CD8-positive, alpha-beta memory T cell (primary cell): ENCODE measurements at regions of chr1 and their contacts with region 1.

Region 1: DNA sequence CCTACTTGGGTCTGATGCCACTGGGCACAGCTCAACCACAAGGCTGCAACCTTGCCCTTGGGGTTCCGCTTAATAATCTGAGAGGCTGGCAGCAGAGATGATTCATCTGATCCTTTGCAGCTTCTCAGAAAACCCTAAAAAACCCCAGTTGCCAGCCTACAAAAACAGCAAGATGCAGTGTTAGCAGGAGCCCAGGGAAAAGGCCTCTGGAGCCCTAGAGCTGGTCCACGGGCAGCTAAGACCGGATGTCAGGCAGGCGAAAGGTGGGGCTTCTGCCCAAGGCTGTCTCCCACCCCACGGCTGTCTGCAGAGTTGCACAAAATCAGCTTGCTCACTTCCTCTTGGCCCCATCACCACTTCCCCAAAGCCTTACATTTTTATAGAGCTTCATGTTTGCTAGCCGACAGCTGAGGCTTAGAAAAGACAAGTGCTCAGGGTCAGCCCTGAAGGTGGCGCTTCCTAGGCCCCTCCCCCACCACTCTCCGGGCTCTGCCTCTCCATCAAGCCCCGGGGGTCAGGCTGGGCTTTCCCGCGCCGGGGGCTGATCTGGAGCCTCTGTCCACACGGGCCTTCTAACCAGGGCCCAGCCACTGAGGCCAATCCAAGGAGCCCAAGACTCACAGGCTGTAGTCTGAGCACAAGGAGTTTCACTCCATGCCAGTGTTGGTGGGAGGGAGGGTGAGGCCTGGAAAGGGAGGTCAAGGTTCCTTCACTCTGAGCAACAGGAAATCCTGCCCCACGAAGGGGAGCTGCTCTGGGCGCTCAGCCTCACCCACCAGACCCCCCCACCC is 4.2 kb upstream of the ADORA3 start:
- DNase-seq: peak; percentile 43 to 72 (median 52)
- H3K4me3 ChIP-seq: peak overlapping the region; percentile 68
- H3K4me3 Mint-ChIP-seq: peak overlapping the region; percentile 22 to 88 (median 83)
- H3K27ac ChIP-seq: peak overlapping the region; percentile 87
- H3K27ac Mint-ChIP-seq: peak overlapping the region; percentile 74 to 99 (median 96)
- H3K4me1 ChIP-seq: peaks cover 88% of the 10 kb centered on the region
- H3K4me1 Mint-ChIP-seq: peaks cover 57 to 61% (median 60%) of the 10 kb centered on the region in 3 donors
- H3K27me3 ChIP-seq: no peaks in the 10 kb centered on the region
- H3K27me3 Mint-ChIP-seq: no peaks in the 10 kb centered on the region

Region 2: DNA sequence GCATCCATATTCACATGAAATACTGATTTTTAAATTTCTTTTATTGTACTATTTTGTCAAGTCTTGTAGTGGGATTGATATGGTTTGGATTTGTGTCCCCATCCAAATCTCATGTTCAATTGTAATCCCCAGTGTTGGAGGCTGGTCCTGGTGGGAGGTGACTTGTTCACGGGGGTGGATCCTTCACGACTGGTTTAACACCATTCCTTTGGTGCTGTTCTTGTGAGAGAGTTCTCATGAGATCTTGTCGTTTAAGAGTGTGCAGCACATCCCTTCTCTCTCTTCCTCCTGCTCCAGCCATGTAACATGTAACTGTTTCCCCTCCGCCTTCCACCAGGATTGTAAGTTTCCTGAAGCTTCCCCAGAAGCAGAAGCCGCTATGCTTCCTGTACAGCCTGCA is 395.6 kb before region 1 on chr1:
- CTCF ChIA-PET with region 1: no interaction called
- POLR2A ChIA-PET with region 1: no interaction called
- DNase-seq: no peak
- H3K4me3 ChIP-seq: no peak overlapping the region
- H3K4me3 Mint-ChIP-seq: no peak overlapping the region
- H3K27ac ChIP-seq: no peak overlapping the region
- H3K27ac Mint-ChIP-seq: no peak overlapping the region
- H3K4me1 ChIP-seq: no peaks in the 10 kb centered on the region
- H3K4me1 Mint-ChIP-seq: no peaks in the 10 kb centered on the region
- H3K27me3 ChIP-seq: no peaks in the 10 kb centered on the region
- H3K27me3 Mint-ChIP-seq: peaks cover 5 to 6% of the 10 kb centered on the region in 2 donors

Region 3: GRCh38 chr1:111471012-111471411 is 36.6 kb before region 1 on chr1:
- CTCF ChIA-PET with region 1: interaction called, 33 read pairs
- POLR2A ChIA-PET with region 1: interaction called, 4 read pairs
- DNase-seq: peak; percentile 47 to 84 (median 82)
- H3K4me3 ChIP-seq: peak overlapping the region; percentile 55
- H3K4me3 Mint-ChIP-seq: no peak overlapping the region
- H3K27ac ChIP-seq: peak overlapping the region; percentile 40
- H3K27ac Mint-ChIP-seq: no peak overlapping the region
- H3K4me1 ChIP-seq: peaks cover 60% of the 10 kb centered on the region
- H3K4me1 Mint-ChIP-seq: peaks cover 22 to 35% (median 29%) of the 10 kb centered on the region in 3 donors
- H3K27me3 ChIP-seq: no peaks in the 10 kb centered on the region
- H3K27me3 Mint-ChIP-seq: no peaks in the 10 kb centered on the region

Region 4: DNA sequence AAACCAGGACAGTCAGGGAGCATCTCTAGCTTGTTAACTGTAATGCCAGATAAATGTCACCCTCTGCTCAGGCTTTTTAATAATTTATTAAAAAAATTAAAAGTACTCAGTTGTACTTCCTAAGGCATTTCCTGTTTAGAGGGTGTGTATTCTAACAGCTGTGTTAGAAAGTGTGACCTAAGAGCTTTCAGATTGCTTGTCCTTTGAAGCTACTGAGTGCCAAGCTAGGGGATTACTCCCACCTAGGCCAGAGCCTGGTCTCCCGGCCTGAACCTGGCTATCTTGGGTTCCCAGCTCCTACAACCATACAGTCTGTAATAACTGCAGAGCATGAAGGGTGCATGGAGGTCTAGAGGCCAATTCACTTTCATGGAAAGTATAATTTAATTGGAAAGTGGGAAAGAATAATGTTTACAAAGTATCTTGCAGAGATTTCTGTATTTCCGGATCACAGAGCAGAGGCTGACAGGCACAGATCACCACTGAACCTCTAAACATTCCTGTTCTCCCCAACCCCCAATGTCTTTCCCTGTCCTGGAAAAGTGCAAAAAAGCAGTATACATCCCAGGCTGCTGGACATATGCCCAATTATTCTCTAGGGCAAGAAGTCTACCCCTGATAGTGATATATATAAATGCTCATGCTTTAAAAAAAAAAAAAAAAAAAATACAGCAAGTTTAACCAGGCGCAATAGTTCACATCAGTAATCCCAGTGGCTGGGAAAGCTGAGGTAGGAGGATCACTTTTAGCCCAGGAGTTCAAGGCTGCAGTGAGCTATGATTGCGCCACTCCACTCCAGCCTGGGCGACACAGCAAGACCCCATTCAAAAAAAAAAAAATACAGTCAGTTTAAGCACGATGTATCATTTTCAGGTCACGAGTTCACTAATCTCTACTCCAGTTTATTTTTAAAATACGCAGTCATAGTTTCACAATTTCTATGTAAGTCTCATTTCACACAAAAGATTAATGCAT is 75.3 kb after region 1 on chr1:
- CTCF ChIA-PET with region 1: interaction called, 13 read pairs
- POLR2A ChIA-PET with region 1: interaction called, 3 read pairs
- DNase-seq: no peak
- H3K4me3 ChIP-seq: no peak overlapping the region
- H3K4me3 Mint-ChIP-seq: peak overlapping the region in 2 of 7 donors; percentile 12 to 25
- H3K27ac ChIP-seq: no peak overlapping the region
- H3K27ac Mint-ChIP-seq: peak overlapping the region in 4 of 8 donors; percentile 8 to 59 (median 53)
- H3K4me1 ChIP-seq: peaks cover 14% of the 10 kb centered on the region
- H3K4me1 Mint-ChIP-seq: peaks cover 14 to 23% (median 16%) of the 10 kb centered on the region in 3 donors
- H3K27me3 ChIP-seq: no peaks in the 10 kb centered on the region
- H3K27me3 Mint-ChIP-seq: no peaks in the 10 kb centered on the region

Region 5: GRCh38 chr1:111619635-111620440 is 112.2 kb after region 1 on chr1 and contains the start of gene RAP1A:
- CTCF ChIA-PET with region 1: interaction called, 18 read pairs
- POLR2A ChIA-PET with region 1: interaction called, 5 read pairs
- DNase-seq: peak; percentile 86 to 96 (median 93)
- H3K4me3 ChIP-seq: peak within 1 kb of the TSS; percentile 95
- H3K4me3 Mint-ChIP-seq: peak within 1 kb of the TSS; percentile 95 to 100 (median 98)
- H3K27ac ChIP-seq: peak within 1 kb of the TSS; percentile 73
- H3K27ac Mint-ChIP-seq: peak within 1 kb of the TSS; percentile 91 to 99 (median 96)
- H3K4me1 ChIP-seq: peaks cover 78% of the 10 kb centered on the region
- H3K4me1 Mint-ChIP-seq: peaks cover 72 to 82% (median 75%) of the 10 kb centered on the region in 3 donors
- H3K27me3 ChIP-seq: no peaks in the 10 kb centered on the region
- H3K27me3 Mint-ChIP-seq: no peaks in the 10 kb centered on the region
- total RNA-seq, gene RAP1A: 252 to 256 TPM

Region 6: DNA sequence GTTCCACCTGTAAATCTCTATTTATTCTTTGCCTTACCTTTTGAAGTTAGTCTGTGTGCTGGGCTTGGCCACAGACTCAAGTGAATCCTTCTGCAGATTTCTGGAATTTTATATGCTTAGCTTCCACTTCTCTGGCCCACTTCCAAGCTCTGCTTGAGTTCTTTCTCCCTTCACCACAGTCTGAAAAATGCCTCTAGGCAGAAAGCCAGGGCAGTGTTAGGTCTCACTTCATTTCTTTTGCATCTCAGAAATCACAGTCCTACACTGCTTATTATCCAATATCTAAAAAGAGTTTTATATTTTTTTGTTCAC is 182.7 kb after region 1 on chr1:
- CTCF ChIA-PET with region 1: interaction called, 16 read pairs
- POLR2A ChIA-PET with region 1: interaction called, 3 read pairs
- DNase-seq: no peak
- H3K4me3 ChIP-seq: no peak overlapping the region
- H3K4me3 Mint-ChIP-seq: peak overlapping the region in 1 of 7 donors; percentile 1
- H3K27ac ChIP-seq: no peak overlapping the region
- H3K27ac Mint-ChIP-seq: peak overlapping the region; percentile 13 to 78 (median 64)
- H3K4me1 ChIP-seq: peaks cover 8% of the 10 kb centered on the region
- H3K4me1 Mint-ChIP-seq: peaks cover 63 to 90% (median 82%) of the 10 kb centered on the region in 3 donors
- H3K27me3 ChIP-seq: no peaks in the 10 kb centered on the region
- H3K27me3 Mint-ChIP-seq: no peaks in the 10 kb centered on the region

Region 7: DNA sequence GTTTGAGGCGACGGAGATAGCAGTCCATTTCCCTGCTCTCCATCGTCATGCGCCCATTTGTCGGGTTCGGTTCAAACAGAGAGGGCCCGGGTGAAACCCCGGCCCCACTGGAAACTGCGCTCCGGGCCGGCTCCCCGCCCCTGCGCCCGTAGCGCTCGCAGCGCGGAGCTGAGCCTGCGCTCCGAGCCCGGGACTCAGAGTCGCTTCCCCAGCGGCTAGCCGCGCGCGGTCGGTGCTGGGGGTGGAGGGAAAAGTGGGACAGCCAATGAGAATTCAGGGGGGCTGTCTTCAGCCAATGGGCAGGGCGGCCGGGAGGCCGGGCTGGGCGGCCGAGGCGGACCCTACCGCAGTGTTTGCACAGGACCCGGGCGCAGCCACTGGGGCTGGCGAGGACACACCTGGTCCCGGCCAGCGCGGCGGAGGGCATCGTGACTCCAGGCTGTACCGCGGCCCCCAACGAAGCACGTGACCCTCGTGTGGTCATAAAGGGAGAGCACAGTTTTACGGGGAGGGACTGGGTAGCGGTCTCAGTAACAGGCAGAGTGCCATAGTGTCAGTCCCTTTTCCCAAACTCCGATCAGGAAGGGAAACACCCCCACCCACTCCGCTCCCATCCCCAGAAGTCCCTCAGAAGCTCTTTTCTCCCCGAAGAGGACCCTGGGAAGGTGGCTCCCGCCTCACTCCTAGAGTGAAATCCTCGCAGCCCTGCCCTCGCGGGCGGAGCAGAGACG is 231.8 kb after region 1 on chr1 and contains the start of gene INKA2:
- CTCF ChIA-PET with region 1: interaction called, 13 read pairs
- POLR2A ChIA-PET with region 1: no interaction called
- DNase-seq: peak; percentile 37 to 69 (median 50)
- H3K4me3 ChIP-seq: peak within 1 kb of the TSS; percentile 74
- H3K4me3 Mint-ChIP-seq: peak within 1 kb of the TSS; percentile 85 to 96 (median 89)
- H3K27ac ChIP-seq: no peak within 1 kb of the TSS
- H3K27ac Mint-ChIP-seq: peak within 1 kb of the TSS in 7 of 8 donors; percentile 21 to 91 (median 85)
- H3K4me1 ChIP-seq: peaks cover 22% of the 10 kb centered on the region
- H3K4me1 Mint-ChIP-seq: peaks cover 15 to 26% (median 16%) of the 10 kb centered on the region in 3 donors
- H3K27me3 ChIP-seq: peaks cover 30% of the 10 kb centered on the region
- H3K27me3 Mint-ChIP-seq: peaks cover 16% of the 10 kb centered on the region in 2 donors
- total RNA-seq, gene INKA2: 1.8 to 3.8 TPM

Region 8: GRCh38 chr1:111769517-111770146 is 262.0 kb after region 1 on chr1:
- CTCF ChIA-PET with region 1: interaction called, 24 read pairs
- POLR2A ChIA-PET with region 1: no interaction called
- DNase-seq: peak in 3 of 5 donors; percentile 38 to 53 (median 49)
- H3K4me3 ChIP-seq: no peak overlapping the region
- H3K4me3 Mint-ChIP-seq: no peak overlapping the region
- H3K27ac ChIP-seq: no peak overlapping the region
- H3K27ac Mint-ChIP-seq: peak overlapping the region in 6 of 8 donors; percentile 1 to 65 (median 24)
- H3K4me1 ChIP-seq: no peaks in the 10 kb centered on the region
- H3K4me1 Mint-ChIP-seq: peaks cover 2 to 6% (median 5%) of the 10 kb centered on the region in 3 donors
- H3K27me3 ChIP-seq: no peaks in the 10 kb centered on the region
- H3K27me3 Mint-ChIP-seq: no peaks in the 10 kb centered on the region

Region 9: DNA sequence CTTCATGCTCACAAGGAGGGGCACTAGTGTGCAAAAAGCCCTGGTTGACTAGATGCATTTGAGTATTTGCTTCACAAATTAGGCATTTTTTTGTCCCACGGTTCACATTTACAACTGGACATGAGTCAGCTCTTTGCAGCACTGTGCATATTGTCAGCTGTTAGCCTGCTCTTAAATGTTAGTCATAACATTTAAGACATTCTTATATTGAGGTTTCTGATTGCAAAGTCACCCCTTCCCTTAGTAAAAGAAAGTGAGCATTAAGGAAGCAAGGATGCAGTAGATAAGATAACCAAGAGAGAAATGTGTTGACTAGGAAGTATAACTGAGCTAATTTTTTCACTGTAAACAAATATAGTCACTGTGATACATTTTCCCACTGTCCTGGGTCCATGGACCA is 755.8 kb after region 1 on chr1:
- CTCF ChIA-PET with region 1: no interaction called
- POLR2A ChIA-PET with region 1: no interaction called
- DNase-seq: no peak
- H3K4me3 ChIP-seq: no peak overlapping the region
- H3K4me3 Mint-ChIP-seq: no peak overlapping the region
- H3K27ac ChIP-seq: no peak overlapping the region
- H3K27ac Mint-ChIP-seq: no peak overlapping the region
- H3K4me1 ChIP-seq: no peaks in the 10 kb centered on the region
- H3K4me1 Mint-ChIP-seq: no peaks in the 10 kb centered on the region
- H3K27me3 ChIP-seq: no peaks in the 10 kb centered on the region
- H3K27me3 Mint-ChIP-seq: peaks cover 2 to 22% of the 10 kb centered on the region in 2 donors